ENCODE measurements at regions of chr19 and their contacts with region 1.

Region 1: DNA sequence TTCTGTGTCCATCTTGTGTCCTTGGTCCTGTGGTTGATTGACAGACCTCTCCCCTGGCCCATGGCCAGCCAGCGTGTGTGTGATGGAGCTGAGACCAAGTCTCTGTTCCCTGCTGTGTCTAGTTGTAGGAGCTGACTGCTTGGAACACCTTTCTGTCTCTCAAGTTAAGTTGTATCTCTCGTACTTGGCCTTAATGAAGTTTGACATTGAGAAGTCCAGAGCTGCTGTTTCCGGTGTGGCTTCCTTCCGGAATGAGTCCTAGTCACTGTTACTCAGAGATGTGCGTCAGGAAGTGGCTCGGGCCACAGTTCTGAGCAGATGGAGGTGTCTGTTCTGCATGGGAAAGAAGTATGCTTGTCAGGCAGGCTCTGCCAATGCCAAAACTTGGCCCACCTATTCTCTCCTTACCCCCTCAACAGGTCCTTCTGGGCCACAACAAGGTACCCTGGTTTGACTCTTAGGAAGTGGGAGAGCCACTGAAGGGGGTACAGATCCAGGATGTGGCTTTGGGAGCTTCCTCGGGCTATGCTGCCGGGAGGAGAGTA is 54.3 kb downstream of the GATAD2A start:
- DNase-seq: peak; percentile 68 to 84
- ATAC-seq: peak; percentile 51 to 79 (median 67)
- H3K4me3 ChIP-seq: peak overlapping the region; percentile 25
- H3K4me3 Mint-ChIP-seq: peak overlapping the region; percentile 95
- H3K27ac ChIP-seq: peak overlapping the region; percentile 92
- H3K27ac Mint-ChIP-seq: peak overlapping the region; percentile 97 to 100
- H3K4me1 ChIP-seq: peaks cover 93% of the 10 kb centered on the region
- H3K4me1 Mint-ChIP-seq: peaks cover 78 to 82% of the 10 kb centered on the region in 2 donors
- H3K27me3 ChIP-seq: no peaks in the 10 kb centered on the region
- H3K27me3 Mint-ChIP-seq: no peaks in the 10 kb centered on the region
- CTCF ChIP-seq: no peak

Region 2: GRCh38 chr19:19420570-19421298 is 39.0 kb before region 1 on chr19:
- intact Hi-C with region 1: loop called (anchors 1 kb)
- DNase-seq: peak; percentile 65 to 85
- ATAC-seq: peak; percentile 86 to 93 (median 91)
- H3K4me3 ChIP-seq: no peak overlapping the region
- H3K4me3 Mint-ChIP-seq: peak overlapping the region; percentile 82
- H3K27ac ChIP-seq: peak overlapping the region; percentile 86
- H3K27ac Mint-ChIP-seq: peak overlapping the region; percentile 88 to 94
- H3K4me1 ChIP-seq: peaks cover 93% of the 10 kb centered on the region
- H3K4me1 Mint-ChIP-seq: peaks cover 58 to 67% of the 10 kb centered on the region in 2 donors
- H3K27me3 ChIP-seq: no peaks in the 10 kb centered on the region
- H3K27me3 Mint-ChIP-seq: no peaks in the 10 kb centered on the region
- CTCF ChIP-seq: no peak

Region 3: GRCh38 chr19:19444681-19445155 is 15.1 kb before region 1 on chr19:
- intact Hi-C with region 1: loop called (anchors 2 kb)
- DNase-seq: peak in 1 of 2 donors; percentile 48
- ATAC-seq: peak; percentile 37 to 63 (median 38)
- H3K4me3 ChIP-seq: no peak overlapping the region
- H3K4me3 Mint-ChIP-seq: peak overlapping the region; percentile 74
- H3K27ac ChIP-seq: peak overlapping the region; percentile 63
- H3K27ac Mint-ChIP-seq: peak overlapping the region; percentile 78 to 83
- H3K4me1 ChIP-seq: peaks cover 63% of the 10 kb centered on the region
- H3K4me1 Mint-ChIP-seq: peaks cover 70 to 73% of the 10 kb centered on the region in 2 donors
- H3K27me3 ChIP-seq: no peaks in the 10 kb centered on the region
- H3K27me3 Mint-ChIP-seq: no peaks in the 10 kb centered on the region
- CTCF ChIP-seq: no peak

Region 4: GRCh38 chr19:19475849-19476828 is 16.4 kb after region 1 on chr19:
- intact Hi-C with region 1: loop called (anchors 2 kb)
- DNase-seq: peak in 1 of 2 donors; percentile 43
- ATAC-seq: peak; percentile 42 to 60 (median 57)
- H3K4me3 ChIP-seq: no peak overlapping the region
- H3K4me3 Mint-ChIP-seq: peak overlapping the region; percentile 79
- H3K27ac ChIP-seq: peak overlapping the region; percentile 60
- H3K27ac Mint-ChIP-seq: peak overlapping the region; percentile 82 to 84
- H3K4me1 ChIP-seq: peaks cover 70% of the 10 kb centered on the region
- H3K4me1 Mint-ChIP-seq: peaks cover 66% of the 10 kb centered on the region in 2 donors
- H3K27me3 ChIP-seq: no peaks in the 10 kb centered on the region
- H3K27me3 Mint-ChIP-seq: no peaks in the 10 kb centered on the region
- CTCF ChIP-seq: peak; percentile 38